ENCODE measurements at regions of chr9 and their contacts with region 1.

Region 1: DNA sequence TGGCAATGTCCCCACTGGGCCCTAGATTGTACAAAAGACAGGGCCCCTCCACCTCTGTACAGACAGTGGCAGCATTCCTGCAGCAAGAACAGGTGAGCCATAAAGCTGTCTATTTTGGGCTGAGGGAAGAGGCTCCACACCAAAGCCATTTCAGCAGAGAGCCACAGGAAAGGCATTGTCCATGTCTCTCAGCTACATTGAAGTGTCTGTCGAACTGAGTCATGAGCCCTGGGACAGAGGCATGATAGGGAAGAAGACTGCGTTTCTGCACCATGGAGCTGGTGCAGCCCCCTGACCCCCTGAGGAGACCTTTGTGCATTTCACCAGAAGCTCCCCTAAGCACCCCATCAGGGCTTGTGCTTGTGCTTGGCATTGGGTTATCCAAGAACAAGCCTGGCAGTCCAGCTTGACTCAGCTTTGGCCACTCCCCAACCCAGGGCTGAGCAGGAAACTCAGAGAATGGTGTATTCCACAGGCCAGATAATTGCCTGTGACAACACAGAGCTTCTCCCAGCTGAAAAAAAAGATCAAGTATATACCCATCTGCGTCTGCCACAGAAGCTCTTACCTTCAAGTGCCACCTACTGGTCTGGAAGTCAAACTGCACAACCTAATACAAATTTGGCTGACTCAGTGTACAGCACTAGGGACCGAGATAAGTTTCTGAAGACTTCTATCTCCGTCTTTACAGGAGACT is 5.9 kb upstream of the FRMD3 start:
- DNase-seq: peak; percentile 8 to 32 (median 26)
- ATAC-seq: peak; percentile 79
- H3K4me3 ChIP-seq: no peak overlapping the region
- H3K27ac ChIP-seq: no peak overlapping the region
- H3K4me1 ChIP-seq: peaks cover 6% of the 10 kb centered on the region
- H3K27me3 ChIP-seq: no peaks in the 10 kb centered on the region
- CTCF ChIP-seq: peak; percentile 41 to 81 (median 76)
- POLR2A ChIP-seq: no peak

Region 2: DNA sequence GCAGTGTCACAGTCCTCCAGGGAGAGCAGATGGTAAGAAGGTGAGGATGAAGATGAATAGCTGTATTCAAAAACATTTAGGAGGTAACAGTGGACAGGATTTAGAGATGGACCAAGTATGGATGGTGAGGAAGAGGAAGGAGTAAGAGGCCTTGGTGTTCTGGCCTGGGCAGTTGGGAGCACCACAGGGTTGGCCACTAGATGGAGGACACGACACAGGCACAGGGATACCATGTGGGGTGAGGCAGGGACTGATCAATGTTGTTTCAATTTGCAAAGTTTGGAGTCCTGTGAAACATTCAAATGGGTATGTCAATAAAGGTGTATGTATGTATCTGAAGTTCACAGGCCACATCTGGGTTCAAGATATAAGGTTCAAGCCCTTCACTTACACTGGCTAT is 340.1 kb before region 1 on chr9:
- intact Hi-C with region 1: loop called (anchors 10 kb)
- DNase-seq: peak; percentile 13 to 59 (median 36)
- ATAC-seq: peak; percentile 66
- H3K4me3 ChIP-seq: no peak overlapping the region
- H3K27ac ChIP-seq: no peak overlapping the region
- H3K4me1 ChIP-seq: no peaks in the 10 kb centered on the region
- H3K27me3 ChIP-seq: no peaks in the 10 kb centered on the region
- CTCF ChIP-seq: peak in 6 of 7 experiments; percentile 15 to 56 (median 44)
- POLR2A ChIP-seq: no peak

Region 3: DNA sequence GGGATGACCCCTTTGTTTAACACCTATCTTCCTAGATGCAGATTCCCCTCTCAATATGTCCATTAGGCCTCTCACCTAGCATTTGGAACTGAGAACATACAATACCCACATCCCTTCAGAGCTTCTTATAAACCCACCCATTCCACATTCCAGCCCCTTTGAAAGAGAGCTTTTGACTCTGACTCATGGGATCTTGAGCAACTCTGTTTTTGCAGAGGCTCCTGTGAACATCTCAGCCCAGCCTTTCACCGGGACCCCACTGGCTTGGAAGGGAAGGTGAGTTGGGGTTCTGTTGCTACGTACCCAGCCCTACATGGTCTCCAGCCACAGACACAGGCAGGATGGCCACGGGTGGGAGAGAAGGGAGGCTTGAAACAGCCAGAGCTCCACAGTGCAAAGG is 201.4 kb before region 1 on chr9:
- intact Hi-C with region 1: loop called (anchors 5 kb)
- DNase-seq: no peak
- ATAC-seq: no peak
- H3K4me3 ChIP-seq: no peak overlapping the region
- H3K27ac ChIP-seq: no peak overlapping the region
- H3K4me1 ChIP-seq: no peaks in the 10 kb centered on the region
- H3K27me3 ChIP-seq: no peaks in the 10 kb centered on the region
- CTCF ChIP-seq: no peak
- POLR2A ChIP-seq: no peak

Measured in body of pancreas (tissue), 4 donors.